ENCODE measurements at regions of chr18 and their contacts with region 1.

Region 1: DNA sequence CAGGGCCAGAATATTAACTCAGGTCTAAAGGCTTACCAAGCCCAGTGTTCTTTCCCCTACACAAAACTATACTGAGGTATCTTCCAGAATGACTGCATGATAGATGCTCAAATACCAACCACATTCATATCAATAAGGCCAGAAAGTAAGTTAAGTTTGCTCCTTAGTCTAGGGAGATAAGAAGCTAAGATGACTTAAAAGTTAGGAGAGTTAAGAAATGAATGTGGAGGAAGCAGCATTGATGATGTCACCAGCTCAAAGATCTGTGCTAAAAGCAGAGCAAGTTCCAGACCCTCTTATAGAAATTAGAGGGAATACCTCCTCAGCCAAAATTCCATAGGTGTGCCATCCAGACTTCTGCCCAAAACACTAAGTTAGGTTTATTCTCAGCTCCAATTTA is 6.1 kb downstream of the PPP4R1 start:
- DNase-seq: no peak
- ATAC-seq: no peak
- H3K4me3 ChIP-seq: no peak overlapping the region
- H3K27ac ChIP-seq: no peak overlapping the region
- H3K4me1 ChIP-seq: peaks cover 2% of the 10 kb centered on the region
- H3K27me3 ChIP-seq: no peaks in the 10 kb centered on the region

Region 2: GRCh38 chr18:9055185-9055584 is 553.1 kb before region 1 on chr18:
- intact Hi-C with region 1: no loop called
- DNase-seq: no peak
- ATAC-seq: peak; percentile 41 to 66
- H3K4me3 ChIP-seq: no peak overlapping the region
- H3K27ac ChIP-seq: no peak overlapping the region
- H3K4me1 ChIP-seq: no peaks in the 10 kb centered on the region
- H3K27me3 ChIP-seq: no peaks in the 10 kb centered on the region

Region 3: DNA sequence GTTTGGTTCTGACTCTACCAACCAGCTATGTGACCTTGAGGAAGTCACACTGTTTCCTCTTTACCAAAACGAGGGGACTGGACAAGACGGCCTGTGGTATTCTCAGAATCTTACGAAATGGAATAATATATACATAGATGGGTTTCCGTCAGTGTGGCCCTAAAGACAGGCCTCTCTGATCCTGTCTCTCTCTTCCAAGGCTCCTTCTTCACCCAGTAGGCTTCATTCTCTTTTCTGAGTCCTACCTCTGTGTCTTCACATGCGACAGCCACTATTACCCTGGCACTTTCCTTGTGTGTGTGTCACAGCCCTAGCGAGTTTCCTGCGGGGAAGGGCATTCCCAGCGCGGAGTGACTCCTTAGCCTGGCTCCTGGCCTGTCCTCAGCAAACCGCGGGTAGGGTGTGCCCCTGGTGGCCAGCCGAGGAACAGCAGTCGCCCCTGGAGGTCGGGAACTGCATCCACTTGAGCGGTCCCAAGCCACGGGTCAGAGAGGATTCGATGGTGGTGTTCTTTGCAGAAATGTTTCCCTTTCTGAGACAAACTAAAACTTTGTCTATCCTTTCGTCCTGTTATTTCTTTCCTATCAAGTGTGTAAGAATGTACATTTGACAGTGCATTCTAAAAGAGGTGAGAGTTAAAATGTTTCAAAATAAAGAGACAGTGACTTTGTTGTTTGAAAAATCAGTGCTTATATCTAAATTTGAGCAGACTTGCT is 163.1 kb after region 1 on chr18:
- intact Hi-C with region 1: loop called in 1 of 4 experiments (anchors 10 kb)
- DNase-seq: peak; percentile 89 to 94 (median 94)
- ATAC-seq: peak; percentile 96
- H3K4me3 ChIP-seq: no peak overlapping the region
- H3K27ac ChIP-seq: no peak overlapping the region
- H3K4me1 ChIP-seq: no peaks in the 10 kb centered on the region
- H3K27me3 ChIP-seq: no peaks in the 10 kb centered on the region